ENCODE measurements at regions of chr10 and their contacts with region 1.

Region 1: DNA sequence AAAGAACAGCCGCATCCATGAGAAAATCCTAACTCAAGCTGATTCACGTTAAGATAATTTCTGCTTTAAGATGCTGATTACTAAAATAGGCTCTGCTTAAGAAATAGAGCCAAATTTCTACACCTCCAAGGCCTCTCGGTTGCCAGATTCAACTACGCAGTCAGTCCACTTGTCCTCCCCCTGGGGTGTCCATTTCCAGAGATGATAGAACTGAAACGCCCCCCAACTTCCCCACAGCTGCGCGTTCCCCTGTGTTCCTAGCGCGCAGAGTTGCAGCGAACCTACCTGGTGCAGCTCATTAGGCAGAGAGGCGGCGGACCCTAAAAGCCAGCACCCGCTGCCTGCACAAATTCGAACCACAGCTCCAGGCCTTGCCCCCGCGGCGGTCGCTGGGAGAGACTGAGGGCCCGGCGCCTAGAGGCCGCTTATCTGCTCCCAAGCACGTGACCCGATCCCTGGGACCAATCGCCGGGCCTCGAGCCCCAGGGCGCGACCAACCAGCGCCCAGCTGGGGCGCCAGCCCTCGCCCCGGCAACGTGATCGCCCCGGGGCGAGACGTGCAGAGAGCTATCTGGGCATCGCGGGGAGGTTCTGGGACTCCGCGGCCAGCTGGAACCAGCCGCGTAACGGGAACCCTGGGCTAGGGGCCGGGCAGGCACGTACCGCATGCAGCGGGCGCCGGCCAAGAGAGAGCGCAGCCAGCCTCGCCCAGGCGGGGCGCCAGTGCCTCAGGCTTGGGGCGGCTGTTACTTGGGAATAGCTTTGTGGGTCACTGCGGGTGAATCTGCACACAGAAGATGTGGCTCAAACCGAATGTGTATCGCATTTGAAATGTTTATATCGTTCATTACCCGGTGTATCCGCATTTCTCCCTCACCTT is at the start of gene PPP1R3C:
- DNase-seq: peak; percentile 94 to 97
- ATAC-seq: peak; percentile 67 to 71
- H3K4me3 ChIP-seq: peak within 1 kb of the TSS; percentile 65 to 77 (median 69)
- H3K27ac ChIP-seq: peak within 1 kb of the TSS; percentile 86 to 94 (median 91)
- H3K4me1 ChIP-seq: peaks cover 31 to 35% of the 10 kb centered on the region in 2 donors
- H3K27me3 ChIP-seq: no peaks in the 10 kb centered on the region
- CTCF ChIP-seq: peak in 3 of 5 experiments; percentile 11 to 32 (median 21)
- POLR2A ChIP-seq: peak; percentile 98 to 99
- total RNA-seq, gene PPP1R3C: 6.6 to 90.7 (median 65.5) TPM

Region 2: GRCh38 chr10:90920986-90921666 is 711.8 kb before region 1 on chr10 and contains the start of gene ANKRD1:
- in situ Hi-C with region 1: no loop called
- intact Hi-C with region 1: loop called (anchors 5 kb)
- DNase-seq: peak; percentile 69 to 88
- ATAC-seq: peak; percentile 94 to 95
- H3K4me3 ChIP-seq: peak within 1 kb of the TSS in 3 of 4 donors; percentile 26 to 43 (median 36)
- H3K27ac ChIP-seq: peak within 1 kb of the TSS; percentile 78 to 87 (median 84)
- H3K4me1 ChIP-seq: peaks cover 47 to 49% of the 10 kb centered on the region in 2 donors
- H3K27me3 ChIP-seq: no peaks in the 10 kb centered on the region
- CTCF ChIP-seq: no peak
- POLR2A ChIP-seq: peak in 1 of 2 donors; percentile 40
- total RNA-seq, gene ANKRD1: 18.6 to 168 (median 98.5) TPM

Region 3: DNA sequence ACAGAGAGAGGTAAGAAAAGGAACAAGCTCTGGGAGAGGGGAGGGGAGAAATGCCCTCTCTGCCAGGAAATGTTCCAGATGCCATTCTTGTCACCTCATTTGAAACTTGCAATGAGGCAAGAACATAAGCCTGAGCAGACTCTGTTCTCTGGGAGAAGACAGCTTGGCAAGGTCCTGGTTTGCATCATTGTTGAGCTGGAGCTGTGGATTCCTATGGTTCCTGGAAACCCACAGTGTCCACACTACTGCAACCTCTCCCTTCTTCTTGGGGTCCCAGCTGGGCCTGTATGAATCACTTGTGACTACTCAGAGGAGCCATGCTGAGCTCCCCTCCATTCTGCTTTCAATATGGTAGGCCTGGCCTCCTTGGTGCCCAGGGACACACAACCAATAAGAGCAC is 283.5 kb before region 1 on chr10:
- in situ Hi-C with region 1: no loop called
- intact Hi-C with region 1: loop called (anchors 5 kb)
- DNase-seq: peak; percentile 76 to 89
- ATAC-seq: peak; percentile 96
- H3K4me3 ChIP-seq: no peak overlapping the region
- H3K27ac ChIP-seq: peak overlapping the region; percentile 68 to 83 (median 70)
- H3K4me1 ChIP-seq: peaks cover 23 to 32% of the 10 kb centered on the region in 2 donors
- H3K27me3 ChIP-seq: no peaks in the 10 kb centered on the region
- CTCF ChIP-seq: no peak
- POLR2A ChIP-seq: no peak

Region 4: GRCh38 chr10:91409869-91410637 is 222.9 kb before region 1 on chr10 and contains the start of gene HECTD2:
- in situ Hi-C with region 1: no loop called
- intact Hi-C with region 1: loop called (anchors 2 kb)
- DNase-seq: peak; percentile 46 to 71
- ATAC-seq: peak; percentile 84
- H3K4me3 ChIP-seq: peak within 1 kb of the TSS; percentile 70 to 91 (median 80)
- H3K27ac ChIP-seq: peak within 1 kb of the TSS; percentile 89 to 98 (median 97)
- H3K4me1 ChIP-seq: peaks cover 8 to 11% of the 10 kb centered on the region in 2 donors
- H3K27me3 ChIP-seq: no peaks in the 10 kb centered on the region
- CTCF ChIP-seq: peak in 4 of 5 experiments; percentile 64 to 84 (median 73)
- POLR2A ChIP-seq: peak; percentile 47 to 73
- total RNA-seq, gene HECTD2: 1.9 to 7.9 (median 3.9) TPM

Region 5: GRCh38 chr10:91551856-91552255 is 81.1 kb before region 1 on chr10:
- in situ Hi-C with region 1: loop called in 3 of 4 experiments (anchors 5 to 10 kb)
- intact Hi-C with region 1: loop called (anchors 1 kb)
- DNase-seq: no peak
- ATAC-seq: peak; percentile 46 to 66
- H3K4me3 ChIP-seq: no peak overlapping the region
- H3K27ac ChIP-seq: no peak overlapping the region
- H3K4me1 ChIP-seq: peaks cover 8 to 16% of the 10 kb centered on the region in 2 donors
- H3K27me3 ChIP-seq: no peaks in the 10 kb centered on the region
- CTCF ChIP-seq: peak in 3 of 5 experiments; percentile 33 to 55 (median 34)
- POLR2A ChIP-seq: no peak

Region 6: DNA sequence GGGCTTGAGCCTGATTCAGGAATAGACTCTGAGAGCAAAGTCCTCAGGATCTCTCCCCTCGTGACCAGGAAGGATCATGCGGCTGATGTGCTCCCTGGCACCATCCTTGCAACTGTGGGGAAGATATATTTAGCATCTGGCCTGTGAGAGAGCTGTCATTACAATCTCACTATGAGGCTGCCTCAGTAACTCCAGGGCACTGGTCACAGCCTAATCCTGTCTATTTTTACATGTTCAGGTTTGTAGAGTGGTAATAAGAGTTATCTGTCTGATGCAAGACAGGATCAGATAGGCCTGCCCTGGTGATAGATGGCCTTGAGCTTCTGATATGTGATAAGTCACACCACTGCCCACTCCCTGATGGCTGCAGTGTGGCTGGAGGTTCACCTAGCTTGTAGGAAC is 50.8 kb before region 1 on chr10:
- in situ Hi-C with region 1: no loop called
- intact Hi-C with region 1: loop called (anchors 1 kb)
- DNase-seq: peak; percentile 94 to 98
- ATAC-seq: peak; percentile 93
- H3K4me3 ChIP-seq: no peak overlapping the region
- H3K27ac ChIP-seq: peak overlapping the region; percentile 90 to 99 (median 92)
- H3K4me1 ChIP-seq: peaks cover 21 to 22% of the 10 kb centered on the region in 2 donors
- H3K27me3 ChIP-seq: no peaks in the 10 kb centered on the region
- CTCF ChIP-seq: no peak
- POLR2A ChIP-seq: peak; percentile 55 to 68

Region 7: DNA sequence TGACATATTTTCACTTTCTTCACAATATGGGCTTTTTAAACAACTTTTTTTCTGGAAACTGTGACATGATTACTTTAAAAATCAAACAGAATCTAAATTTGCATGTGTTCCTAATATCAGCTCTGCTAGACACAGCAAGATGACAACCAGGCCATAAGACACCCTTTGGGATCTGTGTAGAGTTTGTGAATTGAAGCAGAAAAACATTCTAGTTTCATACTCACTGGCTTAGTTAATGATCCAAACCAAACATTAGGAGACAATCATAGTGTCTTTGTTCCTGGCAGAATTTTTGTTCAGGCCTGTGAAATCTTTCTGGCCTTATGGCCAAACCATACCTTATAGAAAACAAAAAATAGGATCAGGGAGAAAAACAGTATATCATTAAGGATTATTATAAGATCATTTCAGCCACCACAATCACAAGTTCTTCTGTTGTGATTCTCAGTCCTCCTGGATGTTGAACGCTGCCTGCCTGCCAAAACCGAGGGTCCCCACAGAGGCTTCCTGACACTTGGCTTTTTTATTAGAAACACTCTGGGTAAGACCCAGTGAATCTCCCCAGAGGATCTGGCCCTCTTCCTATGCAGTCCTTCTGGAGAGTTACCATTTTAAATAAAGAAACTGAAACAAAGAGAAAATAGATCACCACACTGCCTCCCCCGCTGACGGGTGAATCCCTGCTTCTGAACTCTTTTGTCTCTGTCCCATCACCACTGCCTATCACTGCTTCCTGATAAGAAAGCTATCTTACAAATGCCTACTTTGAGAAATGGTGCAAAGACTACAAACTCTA is 79.2 kb after region 1 on chr10:
- in situ Hi-C with region 1: no loop called
- intact Hi-C with region 1: no loop called
- DNase-seq: no peak
- ATAC-seq: no peak
- H3K4me3 ChIP-seq: no peak overlapping the region
- H3K27ac ChIP-seq: no peak overlapping the region
- H3K4me1 ChIP-seq: peaks cover 0 to 6% of the 10 kb centered on the region in 2 donors
- H3K27me3 ChIP-seq: no peaks in the 10 kb centered on the region
- CTCF ChIP-seq: no peak
- POLR2A ChIP-seq: no peak

Region 8: GRCh38 chr10:91797874-91798648 is 165.2 kb after region 1 on chr10 and contains the start of gene TNKS2:
- in situ Hi-C with region 1: no loop called
- intact Hi-C with region 1: loop called (anchors 2 kb)
- DNase-seq: peak; percentile 85 to 93
- ATAC-seq: peak; percentile 67 to 77
- H3K4me3 ChIP-seq: peak within 1 kb of the TSS; percentile 72 to 93 (median 84)
- H3K27ac ChIP-seq: peak within 1 kb of the TSS; percentile 95 to 97 (median 96)
- H3K4me1 ChIP-seq: peaks cover 41 to 50% of the 10 kb centered on the region in 2 donors
- H3K27me3 ChIP-seq: no peaks in the 10 kb centered on the region
- CTCF ChIP-seq: peak in 1 of 5 experiments; percentile 13
- POLR2A ChIP-seq: peak; percentile 95 to 96
- total RNA-seq, gene TNKS2: 26.2 to 40.3 (median 29.5) TPM